GM12878 (cell line): ENCODE measurements at regions of chr6 and their contacts with region 1.

Region 1: DNA sequence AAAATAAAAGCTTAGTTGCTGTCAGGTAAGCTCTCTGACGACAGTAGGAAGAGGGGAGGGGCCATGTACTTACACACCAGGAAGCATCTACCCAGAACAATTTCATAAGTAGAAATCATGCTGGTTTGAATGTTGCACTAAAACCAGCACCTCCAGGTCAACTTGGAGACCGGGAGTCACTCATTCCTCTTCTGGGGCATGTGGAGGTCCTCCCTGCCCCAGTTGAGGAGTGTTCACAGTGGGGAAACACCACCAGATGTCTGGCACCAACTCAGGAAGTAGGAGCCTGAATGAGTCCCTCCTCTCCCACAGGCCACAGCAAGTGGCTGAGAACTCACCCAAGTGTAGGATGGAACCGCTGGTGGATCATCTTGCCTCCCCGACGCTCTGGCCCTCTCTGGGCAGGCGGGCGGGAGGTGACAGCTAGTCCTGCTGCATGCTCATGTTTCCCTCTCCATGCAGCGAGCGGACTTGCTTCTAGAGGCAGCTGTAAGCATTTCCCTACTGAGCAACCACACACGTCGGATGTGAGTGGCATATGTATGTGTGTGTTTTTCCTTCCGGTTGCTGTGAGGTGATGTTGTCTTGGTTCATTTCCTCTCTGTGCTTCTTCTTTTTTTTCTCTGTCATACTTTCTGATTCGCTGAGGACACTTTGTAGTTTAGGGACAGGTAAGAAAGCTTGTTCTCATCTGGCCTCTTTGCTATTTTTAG is 149.5 kb upstream of the NEDD9 start:
- DNase-seq: peak; percentile 92
- ATAC-seq: peak; percentile 77
- H3K4me3 ChIP-seq: peak overlapping the region; percentile 72
- H3K27ac ChIP-seq: peak overlapping the region; percentile 90
- H3K4me1 ChIP-seq: peaks cover 24% of the 10 kb centered on the region
- H3K27me3 ChIP-seq: no peaks in the 10 kb centered on the region
- CTCF ChIP-seq: no peak
- EP300 ChIP-seq: no peak; a peak in 1 of 4 replicates
- POLR2A ChIP-seq: peak; percentile 92
- RAD21 ChIP-seq: 0 out of 2 replicates have a peak, but pooled peaks have one; percentile 5

Region 2: DNA sequence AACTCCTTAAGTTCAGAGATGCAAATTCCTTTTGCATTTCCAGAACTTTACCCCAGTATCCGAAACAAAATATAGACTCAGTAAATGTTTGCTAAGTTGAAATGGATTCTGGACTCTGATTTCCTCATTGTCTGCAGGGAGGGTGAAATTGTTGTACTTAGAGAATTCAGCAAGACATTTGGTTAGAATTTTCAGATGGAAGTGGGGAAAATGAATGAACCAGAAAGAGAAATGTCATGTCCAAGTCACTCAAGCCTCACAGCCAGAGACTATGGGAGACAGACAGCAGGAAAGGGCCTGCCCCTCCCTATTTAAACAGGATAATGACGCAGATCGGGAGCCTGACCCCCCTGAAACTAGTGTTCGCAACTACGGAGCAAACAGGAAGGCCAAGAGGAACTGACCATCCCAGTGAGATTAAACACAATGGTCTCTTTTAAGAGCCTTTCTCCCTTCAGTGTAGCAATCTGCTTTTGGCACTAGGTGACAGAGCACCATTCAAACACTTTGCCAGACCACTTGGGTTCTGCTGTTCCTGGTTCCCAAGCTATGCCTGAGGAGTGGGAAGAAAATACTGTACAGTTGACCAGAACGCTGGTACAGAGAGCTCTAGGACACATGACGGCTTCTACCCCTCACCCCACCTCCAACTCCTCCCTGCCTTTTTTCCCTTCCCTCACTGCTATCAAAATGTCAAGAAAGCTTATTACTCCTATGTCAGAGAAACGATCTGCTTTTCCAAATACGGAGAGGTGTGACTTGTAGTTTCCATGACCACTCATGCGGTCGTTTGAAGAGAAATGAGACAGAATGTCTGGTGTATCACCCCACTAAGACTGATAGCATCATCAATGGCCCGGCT is 163.2 kb before region 1 on chr6:
- CTCF ChIA-PET with region 1: interaction called, 6 read pairs
- POLR2A ChIA-PET with region 1: interaction called, 3 read pairs
- RAD21 ChIA-PET with region 1: interaction called, 6 read pairs
- SMC1A ChIA-PET with region 1: interaction called, 27 read pairs
- in situ Hi-C with region 1: no loop called
- intact Hi-C with region 1: no loop called
- DNase-seq: no peak
- ATAC-seq: no peak
- H3K4me3 ChIP-seq: no peak overlapping the region
- H3K27ac ChIP-seq: no peak overlapping the region
- H3K4me1 ChIP-seq: peaks cover 7% of the 10 kb centered on the region
- H3K27me3 ChIP-seq: no peaks in the 10 kb centered on the region
- CTCF ChIP-seq: no peak
- EP300 ChIP-seq: no peak
- POLR2A ChIP-seq: no peak
- RAD21 ChIP-seq: no peak

Region 3: DNA sequence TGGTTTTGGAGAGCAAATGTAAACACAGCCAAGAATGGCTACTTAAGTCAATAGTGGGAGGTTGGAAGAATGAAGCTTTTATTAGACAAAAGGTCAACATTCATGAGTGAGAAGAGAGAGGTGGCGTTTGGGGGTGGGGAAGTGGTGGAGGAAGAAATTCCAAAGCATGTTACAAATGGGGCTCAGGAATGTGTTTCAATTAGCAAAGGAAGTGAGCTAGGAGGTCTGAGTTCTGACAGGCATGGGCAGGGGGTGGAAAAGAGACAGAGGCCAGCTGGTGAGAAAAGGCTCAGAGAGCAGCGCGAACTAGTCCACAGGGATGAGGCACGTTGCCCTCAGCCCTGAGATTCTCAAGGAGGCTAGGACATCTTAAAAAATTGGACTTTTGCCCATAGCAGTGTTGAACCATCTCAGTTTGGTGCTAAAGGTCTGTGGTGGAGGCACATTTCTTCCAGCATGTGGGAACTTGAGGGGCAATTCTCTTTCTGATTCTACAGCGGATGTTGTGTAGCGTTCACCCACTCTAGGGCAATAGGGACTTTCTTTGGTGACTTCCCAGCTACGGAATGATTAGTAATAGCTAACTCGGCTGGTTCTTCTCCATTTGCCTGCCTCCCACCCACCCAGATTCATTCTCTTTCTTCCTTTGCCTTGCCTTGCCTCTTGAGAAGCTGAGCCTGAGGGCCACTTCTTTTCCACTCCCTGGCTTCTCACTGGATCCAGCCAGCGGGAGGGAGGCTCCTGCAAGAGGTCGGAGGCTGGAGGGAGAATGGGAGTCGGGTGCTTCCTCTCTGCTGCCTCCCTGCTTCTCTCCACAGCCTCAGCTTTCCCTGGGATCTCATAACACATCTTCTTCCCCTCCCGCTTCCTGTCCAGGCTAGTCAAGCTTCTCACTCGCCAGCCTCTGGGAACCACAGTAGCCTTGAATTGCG is 104.4 kb before region 1 on chr6:
- CTCF ChIA-PET with region 1: interaction called, 32 read pairs
- POLR2A ChIA-PET with region 1: interaction called, 52 read pairs
- RAD21 ChIA-PET with region 1: interaction called, 108 read pairs
- SMC1A ChIA-PET with region 1: interaction called, 112 read pairs
- in situ Hi-C with region 1: no loop called
- intact Hi-C with region 1: no loop called
- DNase-seq: peak; percentile 94
- ATAC-seq: peak; percentile 78
- H3K4me3 ChIP-seq: peak overlapping the region; percentile 23; the same call in 1 of the 2 replicates
- H3K27ac ChIP-seq: peak overlapping the region; percentile 95
- H3K4me1 ChIP-seq: peaks cover 46% of the 10 kb centered on the region
- H3K27me3 ChIP-seq: no peaks in the 10 kb centered on the region
- CTCF ChIP-seq: no peak
- EP300 ChIP-seq: peak; percentile 65 to 83; a peak in 2 of 4 replicates
- POLR2A ChIP-seq: peak; percentile 55
- RAD21 ChIP-seq: peak; percentile 12; the same call in 1 of the 2 replicates

Region 4: GRCh38 chr6:11346516-11346915 is 35.4 kb before region 1 on chr6:
- CTCF ChIA-PET with region 1: interaction called, 6 read pairs
- POLR2A ChIA-PET with region 1: interaction called, 5 read pairs
- RAD21 ChIA-PET with region 1: interaction called, 29 read pairs
- SMC1A ChIA-PET with region 1: interaction called, 44 read pairs
- in situ Hi-C with region 1: no loop called
- intact Hi-C with region 1: no loop called
- DNase-seq: peak; percentile 71
- ATAC-seq: peak; percentile 87
- H3K4me3 ChIP-seq: no peak overlapping the region
- H3K27ac ChIP-seq: peak overlapping the region; percentile 65
- H3K4me1 ChIP-seq: peaks cover 39% of the 10 kb centered on the region
- H3K27me3 ChIP-seq: no peaks in the 10 kb centered on the region
- CTCF ChIP-seq: no peak
- EP300 ChIP-seq: peak in 1 of 2 experiments; percentile 22; a peak in 1 of 4 replicates
- POLR2A ChIP-seq: no peak
- RAD21 ChIP-seq: no peak

Region 5: DNA sequence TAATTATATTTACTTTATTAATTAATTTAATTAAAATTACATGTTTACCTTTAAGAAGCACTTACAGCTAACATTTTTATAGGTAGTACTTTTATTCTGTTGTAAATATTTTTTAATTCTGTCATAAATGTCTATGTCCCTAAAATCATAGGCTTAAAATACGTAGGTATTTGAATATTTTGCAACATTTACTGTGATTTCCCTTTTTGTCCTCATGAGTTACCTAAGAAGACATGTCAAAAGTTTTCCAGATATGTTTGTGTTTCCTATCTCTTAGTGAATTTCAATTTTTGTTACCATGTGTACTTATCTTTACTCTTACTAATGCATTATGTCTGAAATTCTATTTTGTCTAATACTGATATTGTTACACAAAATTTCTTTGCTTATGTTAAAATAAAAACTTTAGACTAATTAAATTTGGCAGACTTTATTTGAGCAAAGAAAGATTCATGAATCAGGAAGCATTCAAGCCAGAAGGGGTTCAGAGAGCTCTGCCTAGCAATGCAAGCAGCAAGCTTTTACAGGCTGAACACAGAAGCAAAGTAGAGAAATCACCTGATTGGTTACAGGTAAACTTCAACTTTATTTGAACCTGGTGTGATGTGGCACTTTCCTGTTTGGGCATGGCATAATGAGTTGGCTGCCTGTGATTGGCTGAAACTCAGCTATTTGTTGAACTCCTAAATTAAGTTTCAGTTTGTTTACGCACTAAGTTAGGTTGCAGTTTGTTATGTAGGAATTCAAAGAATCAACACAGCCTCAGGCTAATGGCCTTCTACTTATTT is 32.4 kb after region 1 on chr6:
- CTCF ChIA-PET with region 1: interaction called, 3 read pairs
- POLR2A ChIA-PET with region 1: interaction called, 31 read pairs
- RAD21 ChIA-PET with region 1: interaction called, 86 read pairs
- SMC1A ChIA-PET with region 1: interaction called, 177 read pairs
- in situ Hi-C with region 1: no loop called
- intact Hi-C with region 1: no loop called
- DNase-seq: peak; percentile 72
- ATAC-seq: peak; percentile 79
- H3K4me3 ChIP-seq: no peak overlapping the region
- H3K27ac ChIP-seq: 0 out of 2 replicates have a peak overlapping the region, but pooled peaks have one; percentile 4
- H3K4me1 ChIP-seq: peaks cover 30% of the 10 kb centered on the region
- H3K27me3 ChIP-seq: no peaks in the 10 kb centered on the region
- CTCF ChIP-seq: no peak
- EP300 ChIP-seq: no peak
- POLR2A ChIP-seq: no peak
- RAD21 ChIP-seq: no peak

Region 6: DNA sequence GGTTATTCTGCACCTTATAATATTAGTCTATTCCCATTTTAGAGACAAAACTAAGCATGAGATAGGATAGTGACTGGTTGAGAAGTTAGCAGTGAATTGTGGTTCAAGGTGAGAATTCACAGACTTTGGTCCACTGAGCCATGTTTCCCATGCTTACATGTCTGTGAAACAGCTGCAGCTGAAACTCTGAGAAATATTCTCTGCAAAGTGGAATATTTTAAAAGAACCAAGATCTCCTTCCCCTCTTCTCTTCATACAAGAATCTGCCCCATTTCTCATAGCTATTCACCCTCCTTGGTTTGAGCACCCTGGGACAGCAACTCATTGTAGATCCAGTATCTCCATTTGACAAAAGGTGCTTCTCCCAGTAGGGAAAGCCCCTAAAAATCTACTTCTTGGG is 85.4 kb after region 1 on chr6:
- CTCF ChIA-PET with region 1: interaction called, 13 read pairs
- POLR2A ChIA-PET with region 1: interaction called, 22 read pairs
- RAD21 ChIA-PET with region 1: interaction called, 384 read pairs
- SMC1A ChIA-PET with region 1: interaction called, 61 read pairs
- in situ Hi-C with region 1: no loop called
- intact Hi-C with region 1: no loop called
- DNase-seq: peak; percentile 88
- ATAC-seq: peak; percentile 82
- H3K4me3 ChIP-seq: no peak overlapping the region
- H3K27ac ChIP-seq: peak overlapping the region; percentile 91
- H3K4me1 ChIP-seq: peaks cover 30% of the 10 kb centered on the region
- H3K27me3 ChIP-seq: no peaks in the 10 kb centered on the region
- CTCF ChIP-seq: no peak
- EP300 ChIP-seq: no peak
- POLR2A ChIP-seq: no peak
- RAD21 ChIP-seq: peak; percentile 25

Region 7: GRCh38 chr6:11732036-11732631 is 350.2 kb after region 1 on chr6:
- CTCF ChIA-PET with region 1: no interaction called
- POLR2A ChIA-PET with region 1: no interaction called
- RAD21 ChIA-PET with region 1: no interaction called
- SMC1A ChIA-PET with region 1: no interaction called
- in situ Hi-C with region 1: no loop called
- intact Hi-C with region 1: no loop called
- DNase-seq: peak; percentile 99
- ATAC-seq: peak; percentile 87
- H3K4me3 ChIP-seq: no peak overlapping the region
- H3K27ac ChIP-seq: peak overlapping the region; percentile 89
- H3K4me1 ChIP-seq: peaks cover 43% of the 10 kb centered on the region
- H3K27me3 ChIP-seq: no peaks in the 10 kb centered on the region
- CTCF ChIP-seq: no peak
- EP300 ChIP-seq: peak; percentile 86 to 94
- POLR2A ChIP-seq: peak; percentile 56
- RAD21 ChIP-seq: peak; percentile 47